ENCODE measurements at regions of chr1 and their contacts with region 1.

Region 1: DNA sequence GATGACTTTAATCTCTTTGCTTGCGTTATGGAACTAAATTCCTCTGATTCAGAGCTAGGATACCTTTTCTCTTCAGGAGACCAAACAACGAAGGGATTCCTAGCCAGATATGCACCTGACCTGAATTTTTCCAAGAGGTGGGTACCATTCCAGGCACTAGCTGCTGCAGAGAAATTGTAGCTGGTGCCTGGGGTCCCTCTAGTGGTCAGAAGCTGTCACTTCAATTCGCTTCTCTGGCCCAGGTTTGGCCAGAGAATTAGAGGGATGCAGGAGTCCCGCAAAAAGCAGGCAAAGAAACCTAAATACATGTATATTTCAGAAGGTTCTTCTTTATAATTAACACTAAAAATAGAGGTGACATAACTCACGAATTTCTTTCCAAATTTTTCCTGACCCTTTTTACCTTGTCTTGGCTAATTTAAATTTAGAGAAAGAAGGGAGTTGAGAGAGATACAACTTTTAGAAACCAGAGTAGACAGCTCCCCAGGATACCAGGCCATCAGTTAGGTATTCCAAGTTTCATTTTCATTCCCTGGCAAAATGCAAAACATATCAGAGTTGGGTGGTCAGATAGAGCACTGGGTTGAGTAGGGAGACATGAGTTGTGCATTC is 9.6 kb downstream of the ACKR1 start:
- ATAC-seq: peak; percentile 53 to 85 (median 69)
- H3K4me3 ChIP-seq: no peak overlapping the region
- H3K27ac ChIP-seq: no peak overlapping the region
- H3K4me1 ChIP-seq: no peaks in the 10 kb centered on the region

Region 2: DNA sequence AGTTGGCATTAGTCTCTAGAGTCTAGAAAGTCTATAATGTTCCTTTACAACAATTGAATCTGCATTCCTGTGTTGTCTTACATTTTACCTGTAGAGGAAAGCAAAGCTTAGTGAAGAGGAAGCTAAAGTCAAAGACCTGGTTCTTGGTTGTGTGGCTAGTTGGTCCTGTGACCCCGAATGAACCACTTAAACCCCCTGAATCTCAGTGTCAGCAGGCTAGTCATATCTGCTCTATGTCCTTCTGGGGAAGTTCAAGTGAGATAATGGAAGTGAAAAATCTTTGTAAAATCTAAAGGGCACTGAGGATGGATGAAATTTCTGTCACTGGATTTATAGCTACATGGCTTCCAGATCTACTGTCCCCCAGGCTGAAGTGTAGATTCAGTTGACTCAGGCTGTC is 113.7 kb before region 1 on chr1:
- in situ Hi-C with region 1: no loop called
- ATAC-seq: no peak
- H3K4me3 ChIP-seq: no peak overlapping the region
- H3K27ac ChIP-seq: no peak overlapping the region
- H3K4me1 ChIP-seq: no peaks in the 10 kb centered on the region

Region 3: DNA sequence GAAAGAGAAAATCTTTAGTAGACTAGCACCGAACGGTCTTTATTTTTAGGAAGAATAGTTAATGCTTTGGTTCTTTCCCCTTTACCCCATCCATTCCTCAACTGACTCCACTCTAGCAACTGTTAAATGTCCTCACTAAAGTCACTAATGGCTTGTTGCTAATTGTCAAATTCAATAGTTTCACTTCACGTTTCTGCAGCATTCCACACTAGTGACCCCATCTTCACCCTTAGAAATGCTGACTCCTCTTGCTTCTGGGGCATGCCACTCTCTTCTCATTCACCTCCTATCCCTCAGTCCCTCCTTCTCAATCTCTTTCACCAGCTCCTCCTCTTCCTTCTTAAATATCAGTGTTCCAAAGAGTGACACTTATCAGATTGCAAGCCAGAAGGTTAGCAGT is 62.2 kb before region 1 on chr1:
- in situ Hi-C with region 1: loop called in 1 of 9 experiments (anchors 10 kb)
- ATAC-seq: no peak
- H3K4me3 ChIP-seq: no peak overlapping the region
- H3K27ac ChIP-seq: no peak overlapping the region
- H3K4me1 ChIP-seq: no peaks in the 10 kb centered on the region

Region 4: DNA sequence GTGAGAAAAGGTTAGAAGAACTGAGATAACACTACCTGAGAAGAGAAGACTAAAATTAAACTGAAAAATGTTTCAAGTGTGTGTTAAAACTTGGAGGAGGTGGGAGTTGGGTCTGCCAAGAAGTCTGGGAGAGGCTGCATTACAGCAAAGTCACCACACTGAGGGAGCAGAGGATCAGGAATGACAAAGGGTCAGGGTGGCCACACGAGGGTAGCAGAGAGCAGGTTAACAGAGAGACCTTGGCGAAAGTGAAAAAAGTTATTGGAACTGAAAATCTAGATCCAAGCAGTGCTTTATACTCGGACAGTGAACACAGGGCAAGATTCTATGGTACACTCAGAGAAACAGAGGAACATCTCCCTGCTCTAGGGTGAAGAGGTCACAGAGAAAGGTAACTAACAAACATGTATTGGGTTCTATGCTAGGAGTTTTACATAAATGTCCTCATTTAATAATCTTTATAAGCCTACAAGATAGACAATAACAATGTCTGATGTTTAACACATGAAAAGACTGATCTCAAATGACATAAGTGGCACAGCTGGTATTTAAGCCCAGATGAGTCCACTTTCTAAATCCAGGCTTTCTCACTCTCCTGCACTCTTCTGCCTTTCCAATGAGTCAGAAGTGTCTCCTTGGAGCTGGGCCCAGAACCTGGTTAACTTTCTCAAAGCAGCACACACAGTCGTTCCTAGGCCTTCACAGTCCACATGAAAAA is 53.1 kb before region 1 on chr1:
- in situ Hi-C with region 1: loop called in 2 of 9 experiments (anchors 5 to 10 kb)
- ATAC-seq: peak; percentile 63 to 99 (median 74)
- H3K4me3 ChIP-seq: no peak overlapping the region
- H3K27ac ChIP-seq: no peak overlapping the region
- H3K4me1 ChIP-seq: peaks cover 21 to 30% of the 10 kb centered on the region in 2 donors

Measured in motor neuron (in vitro differentiated cells).